Endothelial cell of umbilical vein (primary cell): ENCODE measurements at regions of chr9 and their contacts with region 1.

Region 1: DNA sequence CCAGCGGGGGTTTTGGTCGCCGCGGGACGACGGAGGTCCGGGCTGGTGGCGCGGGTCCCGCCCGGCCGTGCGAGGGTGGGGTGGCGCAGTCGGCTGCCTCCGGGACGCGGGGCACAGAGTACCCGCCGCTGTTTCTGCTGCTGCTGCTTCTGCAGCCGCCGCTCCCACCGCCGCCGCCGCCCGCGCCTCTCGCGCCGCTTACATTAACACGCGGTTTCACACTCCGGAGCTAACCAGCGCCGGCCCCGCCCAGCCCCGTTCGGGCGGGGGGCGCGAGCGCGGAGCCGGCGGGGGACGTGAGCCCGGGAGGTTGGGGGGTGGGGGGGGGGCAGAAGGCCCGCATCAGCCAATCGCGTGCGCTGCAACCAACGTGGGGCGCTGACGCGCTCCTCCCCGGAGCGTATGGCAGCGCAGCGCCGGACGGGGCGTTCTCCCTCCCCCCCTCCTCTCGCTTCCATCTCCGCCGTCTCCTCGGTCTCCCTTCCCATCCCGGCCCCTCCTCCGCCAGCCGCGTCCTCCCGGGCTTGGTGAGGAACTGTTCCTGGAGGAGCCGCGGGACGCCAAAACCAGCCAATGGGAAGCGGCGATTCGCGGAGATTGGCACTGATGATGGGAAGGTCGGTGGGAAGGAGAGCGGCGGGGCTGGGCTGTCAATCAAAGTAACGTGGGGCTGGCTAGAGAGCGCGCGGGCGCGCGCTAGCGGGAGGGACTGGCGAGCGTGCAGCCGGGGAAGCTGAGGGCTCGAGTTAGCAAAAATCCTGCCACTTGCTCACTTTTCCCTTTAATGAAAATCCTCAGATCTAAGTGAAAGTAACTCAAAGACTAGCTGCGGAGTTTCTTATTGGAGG is at the start of gene TLE1:
- DNase-seq: peak; percentile 100
- H3K4me3 ChIP-seq: peak within 1 kb of the TSS; percentile 78 to 96 (median 88)
- H3K27ac ChIP-seq: peak within 1 kb of the TSS; percentile 67
- H3K4me1 ChIP-seq: peaks cover 28% of the 10 kb centered on the region
- H3K27me3 ChIP-seq: peaks cover 3 to 5% of the 10 kb centered on the region in 2 experiments
- CTCF ChIP-seq: no peak
- POLR2A ChIP-seq: peak; percentile 31
- total RNA-seq, gene TLE1: 58.2 and 60.8 TPM in 2 replicates

Region 2: GRCh38 chr9:80175286-80176150 is 1514.0 kb before region 1 on chr9:
- CTCF ChIA-PET with region 1: interaction called, 5 read pairs
- POLR2A ChIA-PET with region 1: no interaction called
- dilution Hi-C with region 1: no loop called
- intact Hi-C with region 1: loop called (anchors 1 kb)
- DNase-seq: peak; percentile 45
- H3K4me3 ChIP-seq: no peak overlapping the region
- H3K27ac ChIP-seq: no peak overlapping the region
- H3K4me1 ChIP-seq: no peaks in the 10 kb centered on the region
- H3K27me3 ChIP-seq: no peaks in the 10 kb centered on the region
- CTCF ChIP-seq: peak; percentile 33 to 40
- POLR2A ChIP-seq: no peak

Region 3: GRCh38 chr9:81312337-81312736 is 377.2 kb before region 1 on chr9:
- CTCF ChIA-PET with region 1: interaction called, 9 read pairs
- POLR2A ChIA-PET with region 1: no interaction called
- dilution Hi-C with region 1: no loop called
- intact Hi-C with region 1: loop called (anchors 1 kb)
- DNase-seq: peak; percentile 32
- H3K4me3 ChIP-seq: no peak overlapping the region
- H3K27ac ChIP-seq: no peak overlapping the region
- H3K4me1 ChIP-seq: no peaks in the 10 kb centered on the region
- H3K27me3 ChIP-seq: no peaks in the 10 kb centered on the region
- CTCF ChIP-seq: peak in 1 of 2 donors; percentile 9
- POLR2A ChIP-seq: no peak

Region 4: GRCh38 chr9:81370650-81371049 is 318.9 kb before region 1 on chr9:
- CTCF ChIA-PET with region 1: no interaction called
- POLR2A ChIA-PET with region 1: no interaction called
- dilution Hi-C with region 1: no loop called
- intact Hi-C with region 1: no loop called
- DNase-seq: no peak
- H3K4me3 ChIP-seq: no peak overlapping the region
- H3K27ac ChIP-seq: no peak overlapping the region
- H3K4me1 ChIP-seq: peaks cover 13% of the 10 kb centered on the region
- H3K27me3 ChIP-seq: no peaks in the 10 kb centered on the region
- CTCF ChIP-seq: no peak
- POLR2A ChIP-seq: no peak

Region 5: GRCh38 chr9:81529556-81530195 is 159.9 kb before region 1 on chr9:
- CTCF ChIA-PET with region 1: interaction called, 11 read pairs
- POLR2A ChIA-PET with region 1: no interaction called
- dilution Hi-C with region 1: no loop called
- intact Hi-C with region 1: no loop called
- DNase-seq: peak; percentile 89
- H3K4me3 ChIP-seq: no peak overlapping the region
- H3K27ac ChIP-seq: peak overlapping the region; percentile 15
- H3K4me1 ChIP-seq: peaks cover 10% of the 10 kb centered on the region
- H3K27me3 ChIP-seq: no peaks in the 10 kb centered on the region
- CTCF ChIP-seq: no peak
- POLR2A ChIP-seq: no peak

Region 6: DNA sequence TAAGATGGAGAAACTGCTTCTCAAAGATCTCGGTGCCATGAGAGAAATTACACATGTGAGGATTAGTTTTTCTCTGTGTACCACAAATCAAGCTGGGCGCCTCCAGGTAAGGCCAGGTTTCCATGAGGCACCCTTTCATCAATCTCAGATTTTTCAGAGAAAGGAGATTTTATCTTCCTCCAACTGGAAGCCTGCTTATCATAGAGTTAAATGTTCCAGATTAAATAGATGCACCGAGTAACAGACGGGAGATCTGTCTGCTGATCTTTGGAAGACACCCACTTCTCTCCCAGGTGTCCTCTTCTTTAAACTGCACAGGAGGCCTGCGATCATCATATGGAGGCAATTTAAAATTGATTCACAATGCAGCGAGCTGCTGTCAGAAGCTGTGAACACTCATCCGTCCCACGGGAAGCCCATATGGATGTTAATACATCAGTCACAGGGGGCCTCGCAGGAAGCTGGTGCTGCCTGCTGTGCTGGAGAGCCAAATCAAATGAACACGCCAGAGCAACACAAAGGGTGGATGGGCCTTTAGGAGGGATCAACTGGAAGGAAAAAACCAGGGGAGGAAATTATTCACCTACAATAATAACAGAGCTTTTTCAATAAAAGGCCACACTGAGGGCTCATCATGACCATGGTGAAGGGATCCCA is 93.6 kb before region 1 on chr9:
- CTCF ChIA-PET with region 1: interaction called, 5 read pairs
- POLR2A ChIA-PET with region 1: interaction called, 3 read pairs
- dilution Hi-C with region 1: no loop called
- intact Hi-C with region 1: loop called (anchors 1 kb)
- DNase-seq: peak; percentile 94
- H3K4me3 ChIP-seq: peak overlapping the region in 1 of 3 experiments; percentile 21
- H3K27ac ChIP-seq: peak overlapping the region; percentile 87
- H3K4me1 ChIP-seq: peaks cover 52% of the 10 kb centered on the region
- H3K27me3 ChIP-seq: no peaks in the 10 kb centered on the region
- CTCF ChIP-seq: no peak
- POLR2A ChIP-seq: peak; percentile 22

Region 7: GRCh38 chr9:81771571-81771970 is 82.0 kb after region 1 on chr9:
- CTCF ChIA-PET with region 1: no interaction called
- POLR2A ChIA-PET with region 1: no interaction called
- dilution Hi-C with region 1: no loop called
- intact Hi-C with region 1: no loop called
- DNase-seq: peak; percentile 85
- H3K4me3 ChIP-seq: no peak overlapping the region
- H3K27ac ChIP-seq: peak overlapping the region; percentile 20
- H3K4me1 ChIP-seq: peaks cover 8% of the 10 kb centered on the region
- H3K27me3 ChIP-seq: no peaks in the 10 kb centered on the region
- CTCF ChIP-seq: no peak
- POLR2A ChIP-seq: no peak

Region 8: GRCh38 chr9:81814401-81815166 is 125.0 kb after region 1 on chr9:
- CTCF ChIA-PET with region 1: no interaction called
- POLR2A ChIA-PET with region 1: no interaction called
- dilution Hi-C with region 1: no loop called
- intact Hi-C with region 1: loop called (anchors 1 kb)
- DNase-seq: peak; percentile 61
- H3K4me3 ChIP-seq: peak overlapping the region in 1 of 3 experiments; percentile 19
- H3K27ac ChIP-seq: peak overlapping the region; percentile 55
- H3K4me1 ChIP-seq: peaks cover 21% of the 10 kb centered on the region
- H3K27me3 ChIP-seq: no peaks in the 10 kb centered on the region
- CTCF ChIP-seq: no peak
- POLR2A ChIP-seq: no peak

Region 9: GRCh38 chr9:82606492-82607382 is 917.2 kb after region 1 on chr9:
- CTCF ChIA-PET with region 1: interaction called, 4 read pairs
- POLR2A ChIA-PET with region 1: no interaction called
- dilution Hi-C with region 1: no loop called
- intact Hi-C with region 1: loop called (anchors 5 kb)
- DNase-seq: peak; percentile 57
- H3K4me3 ChIP-seq: no peak overlapping the region
- H3K27ac ChIP-seq: no peak overlapping the region
- H3K4me1 ChIP-seq: no peaks in the 10 kb centered on the region
- H3K27me3 ChIP-seq: no peaks in the 10 kb centered on the region
- CTCF ChIP-seq: peak; percentile 22 to 32
- POLR2A ChIP-seq: no peak